ENCODE measurements at regions of chr3 and their contacts with region 1.

Region 1: GRCh38 chr3:94062431-94063404 is at the starts of genes DHFR2 and NSUN3:
- DNase-seq: peak; percentile 67 to 93 (median 78)
- ATAC-seq: peak; percentile 89 to 90 (median 90)
- H3K4me3 ChIP-seq: peak within 1 kb of the TSS; percentile 66 to 97
- H3K4me3 Mint-ChIP-seq: peak within 1 kb of the TSS; percentile 91 to 99 (median 98)
- H3K27ac ChIP-seq: peak within 1 kb of the TSS; percentile 96
- H3K27ac Mint-ChIP-seq: peak within 1 kb of the TSS; percentile 98 to 100
- H3K4me1 ChIP-seq: peaks cover 9 to 15% of the 10 kb centered on the region in 2 experiments
- H3K4me1 Mint-ChIP-seq: peaks cover 54 to 56% (median 55%) of the 10 kb centered on the region in 3 donors
- H3K27me3 ChIP-seq: no peaks in the 10 kb centered on the region
- H3K27me3 Mint-ChIP-seq: no peaks in the 10 kb centered on the region
- total RNA-seq, gene DHFR2: 3.5 to 11.4 (median 8.6) TPM
- total RNA-seq, gene NSUN3: 15.8 to 20.0 (median 18.4) TPM

Region 2: DNA sequence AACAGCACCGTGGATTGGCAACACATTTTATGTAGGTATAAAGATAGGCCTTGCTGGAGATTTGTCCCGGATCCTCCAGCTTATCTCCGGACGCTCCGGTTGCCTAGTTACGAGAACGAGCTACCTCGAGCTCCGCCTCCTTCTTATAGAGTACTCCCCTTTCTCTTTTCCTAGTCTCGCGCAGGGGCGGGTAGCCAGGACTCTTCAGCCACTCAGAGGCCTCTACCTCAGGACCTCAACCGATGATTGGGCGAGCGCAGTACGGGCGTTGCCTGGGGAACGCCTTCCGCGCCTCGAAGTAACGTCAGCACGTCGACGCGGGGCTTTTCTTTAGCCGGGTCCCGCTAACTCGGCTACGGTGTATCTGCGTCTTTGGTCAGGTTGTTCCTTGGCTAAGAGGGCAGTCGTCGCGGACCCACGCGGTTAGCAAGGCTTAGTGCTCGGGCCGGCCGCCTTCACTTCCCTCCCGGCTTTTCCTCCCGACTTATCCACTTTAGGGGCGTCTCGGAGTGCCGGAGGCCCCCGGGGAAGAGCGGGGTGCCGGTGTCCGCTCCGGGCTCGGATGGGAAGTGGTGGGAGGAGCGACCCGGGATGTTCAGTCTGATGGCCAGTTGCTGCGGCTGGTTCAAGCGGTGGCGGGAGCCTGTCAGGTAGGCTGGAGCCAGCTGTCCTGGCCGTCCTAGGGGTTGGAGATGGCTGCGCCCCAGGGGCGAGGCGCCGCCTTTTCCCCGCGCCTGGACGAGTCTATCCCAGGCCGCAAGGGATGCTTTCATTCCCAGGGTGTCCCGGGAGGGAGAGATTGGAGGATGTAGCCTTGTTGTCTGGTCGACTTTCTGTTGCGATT is 82.7 kb before region 1 on chr3 and contains the start of gene ARL13B:
- CTCF ChIA-PET with region 1: interaction called in 1 of 2 experiments, 9 read pairs
- POLR2A ChIA-PET with region 1: interaction called, 3 to 21 read pairs
- DNase-seq: peak; percentile 81 to 97 (median 93)
- ATAC-seq: peak; percentile 100
- H3K4me3 ChIP-seq: peak within 1 kb of the TSS; percentile 87 to 89
- H3K4me3 Mint-ChIP-seq: peak within 1 kb of the TSS; percentile 84 to 89 (median 87)
- H3K27ac ChIP-seq: peak within 1 kb of the TSS; percentile 83
- H3K27ac Mint-ChIP-seq: peak within 1 kb of the TSS; percentile 71 to 88
- H3K4me1 ChIP-seq: peaks cover 8 to 9% of the 10 kb centered on the region in 2 experiments
- H3K4me1 Mint-ChIP-seq: peaks cover 21 to 23% (median 23%) of the 10 kb centered on the region in 3 donors
- H3K27me3 ChIP-seq: no peaks in the 10 kb centered on the region
- H3K27me3 Mint-ChIP-seq: no peaks in the 10 kb centered on the region
- total RNA-seq, gene ARL13B: 6.0 to 11.5 (median 9.2) TPM

Region 3: GRCh38 chr3:94011233-94011711 is 51.4 kb before region 1 on chr3:
- CTCF ChIA-PET with region 1: interaction called in 1 of 2 experiments, 3 read pairs
- POLR2A ChIA-PET with region 1: interaction called in 1 of 2 experiments, 13 read pairs
- DNase-seq: no peak
- ATAC-seq: no peak
- H3K4me3 ChIP-seq: no peak overlapping the region
- H3K4me3 Mint-ChIP-seq: no peak overlapping the region
- H3K27ac ChIP-seq: no peak overlapping the region
- H3K27ac Mint-ChIP-seq: peak overlapping the region in 1 of 2 donors; percentile 7
- H3K4me1 ChIP-seq: peaks cover 0 to 9% of the 10 kb centered on the region in 2 experiments
- H3K4me1 Mint-ChIP-seq: peaks cover 14 to 21% (median 20%) of the 10 kb centered on the region in 3 donors
- H3K27me3 ChIP-seq: no peaks in the 10 kb centered on the region
- H3K27me3 Mint-ChIP-seq: no peaks in the 10 kb centered on the region

Region 4: GRCh38 chr3:94036909-94037507 is 25.7 kb before region 1 on chr3:
- CTCF ChIA-PET with region 1: interaction called in 1 of 2 experiments, 4 read pairs
- POLR2A ChIA-PET with region 1: interaction called, 4 to 18 read pairs
- DNase-seq: peak in 1 of 35 experiments; percentile 32
- ATAC-seq: no peak
- H3K4me3 ChIP-seq: no peak overlapping the region
- H3K4me3 Mint-ChIP-seq: no peak overlapping the region
- H3K27ac ChIP-seq: no peak overlapping the region
- H3K27ac Mint-ChIP-seq: no peak overlapping the region
- H3K4me1 ChIP-seq: no peaks in the 10 kb centered on the region
- H3K4me1 Mint-ChIP-seq: no peaks in the 10 kb centered on the region
- H3K27me3 ChIP-seq: no peaks in the 10 kb centered on the region
- H3K27me3 Mint-ChIP-seq: no peaks in the 10 kb centered on the region

Region 5: DNA sequence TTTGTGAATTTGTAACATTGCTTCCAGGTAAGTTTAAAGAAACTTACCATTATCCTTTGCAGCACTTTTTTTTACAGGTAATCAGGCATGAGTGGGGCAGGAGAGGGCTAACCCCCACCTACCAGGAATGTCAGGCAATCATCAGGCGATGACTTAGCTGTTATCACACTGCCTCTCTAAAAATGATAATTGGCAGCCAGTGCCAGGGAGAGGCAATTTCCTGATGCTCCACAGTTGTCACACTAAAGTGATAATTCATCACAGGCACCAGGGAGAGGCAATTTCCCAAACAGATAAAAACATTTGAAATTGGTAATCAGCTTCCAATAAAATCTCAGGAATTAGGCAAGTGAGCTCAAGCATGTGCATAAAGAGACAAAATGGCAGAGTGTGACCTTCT is 26.4 kb after region 1 on chr3:
- CTCF ChIA-PET with region 1: no interaction called
- POLR2A ChIA-PET with region 1: no interaction called
- DNase-seq: no peak
- ATAC-seq: no peak
- H3K4me3 ChIP-seq: no peak overlapping the region
- H3K4me3 Mint-ChIP-seq: no peak overlapping the region
- H3K27ac ChIP-seq: no peak overlapping the region
- H3K27ac Mint-ChIP-seq: no peak overlapping the region
- H3K4me1 ChIP-seq: no peaks in the 10 kb centered on the region
- H3K4me1 Mint-ChIP-seq: no peaks in the 10 kb centered on the region
- H3K27me3 ChIP-seq: no peaks in the 10 kb centered on the region
- H3K27me3 Mint-ChIP-seq: no peaks in the 10 kb centered on the region

Region 6: GRCh38 chr3:94101851-94102250 is 39.1 kb after region 1 on chr3:
- CTCF ChIA-PET with region 1: interaction called in 1 of 2 experiments, 3 read pairs
- POLR2A ChIA-PET with region 1: interaction called in 1 of 2 experiments, 16 read pairs
- DNase-seq: no peak
- ATAC-seq: no peak
- H3K4me3 ChIP-seq: no peak overlapping the region
- H3K4me3 Mint-ChIP-seq: no peak overlapping the region
- H3K27ac ChIP-seq: no peak overlapping the region
- H3K27ac Mint-ChIP-seq: no peak overlapping the region
- H3K4me1 ChIP-seq: no peaks in the 10 kb centered on the region
- H3K4me1 Mint-ChIP-seq: no peaks in the 10 kb centered on the region
- H3K27me3 ChIP-seq: no peaks in the 10 kb centered on the region
- H3K27me3 Mint-ChIP-seq: no peaks in the 10 kb centered on the region

Region 7: GRCh38 chr3:94117729-94118128 is 55.0 kb after region 1 on chr3:
- CTCF ChIA-PET with region 1: no interaction called
- POLR2A ChIA-PET with region 1: no interaction called
- DNase-seq: no peak
- ATAC-seq: no peak
- H3K4me3 ChIP-seq: no peak overlapping the region
- H3K4me3 Mint-ChIP-seq: no peak overlapping the region
- H3K27ac ChIP-seq: no peak overlapping the region
- H3K27ac Mint-ChIP-seq: no peak overlapping the region
- H3K4me1 ChIP-seq: no peaks in the 10 kb centered on the region
- H3K4me1 Mint-ChIP-seq: peaks cover 0 to 9% (median 6%) of the 10 kb centered on the region in 3 donors
- H3K27me3 ChIP-seq: no peaks in the 10 kb centered on the region
- H3K27me3 Mint-ChIP-seq: no peaks in the 10 kb centered on the region

Region 8: GRCh38 chr3:94184781-94185180 is 122.1 kb after region 1 on chr3:
- CTCF ChIA-PET with region 1: no interaction called
- POLR2A ChIA-PET with region 1: no interaction called
- DNase-seq: no peak
- ATAC-seq: no peak
- H3K4me3 ChIP-seq: no peak overlapping the region
- H3K4me3 Mint-ChIP-seq: no peak overlapping the region
- H3K27ac ChIP-seq: no peak overlapping the region
- H3K27ac Mint-ChIP-seq: no peak overlapping the region
- H3K4me1 ChIP-seq: no peaks in the 10 kb centered on the region
- H3K4me1 Mint-ChIP-seq: no peaks in the 10 kb centered on the region
- H3K27me3 ChIP-seq: no peaks in the 10 kb centered on the region
- H3K27me3 Mint-ChIP-seq: peaks cover 6 to 11% of the 10 kb centered on the region in 2 donors

Measured in T-cell (primary cell).